Activated CD8-positive, alpha-beta T cell treated with anti-CD3 and anti-CD28 coated beads, Interleukin-2, amount 10 ng/mL, durations not matched to agents 7 days and 5 days (primary cell): ENCODE measurements at regions of chr7 and their contacts with region 1.

Region 1: GRCh38 chr7:12436896-12437535 is 33.4 kb upstream of the VWDE start:
- DNase-seq: no peak
- ATAC-seq: no peak
- H3K4me3 Mint-ChIP-seq: no peak overlapping the region
- H3K27ac Mint-ChIP-seq: no peak overlapping the region
- H3K4me1 Mint-ChIP-seq: no peaks in the 10 kb centered on the region
- H3K27me3 Mint-ChIP-seq: peaks cover 6% of the 10 kb centered on the region

Region 2: DNA sequence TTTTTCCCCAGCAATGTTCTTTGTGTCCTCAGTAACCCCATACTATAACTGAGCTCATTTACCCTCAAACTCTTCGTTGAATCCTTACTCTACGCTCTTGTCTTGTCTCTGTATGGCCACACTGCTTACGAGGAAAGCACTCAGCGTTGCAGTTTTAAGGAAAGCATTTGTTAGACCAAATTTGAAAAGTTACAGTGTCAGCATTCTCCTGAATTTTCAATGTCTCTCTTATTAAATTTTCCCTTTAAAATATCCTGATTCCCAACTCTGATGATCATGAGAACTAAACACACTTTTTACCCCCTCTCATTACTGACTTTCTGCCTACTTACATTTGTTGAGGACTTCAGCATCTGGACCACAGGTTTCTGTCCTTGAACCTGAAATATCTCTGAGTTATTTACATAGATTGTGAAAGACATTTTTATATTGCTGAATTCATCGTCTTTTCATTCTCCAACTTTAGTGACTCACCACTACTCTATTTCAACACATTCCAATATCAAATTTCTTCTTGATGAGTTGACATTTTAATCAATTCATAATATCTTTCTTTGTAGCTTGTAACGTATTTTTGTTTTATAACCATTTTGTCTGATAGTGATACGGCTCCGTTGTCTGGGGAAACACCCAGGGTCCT is 13.5 kb before region 1 on chr7:
- CTCF ChIA-PET with region 1: no interaction called
- POLR2A ChIA-PET with region 1: no interaction called
- DNase-seq: no peak
- ATAC-seq: no peak
- H3K4me3 Mint-ChIP-seq: no peak overlapping the region
- H3K27ac Mint-ChIP-seq: no peak overlapping the region
- H3K4me1 Mint-ChIP-seq: no peaks in the 10 kb centered on the region
- H3K27me3 Mint-ChIP-seq: peaks cover 7% of the 10 kb centered on the region

Region 3: GRCh38 chr7:12490117-12490688 is 53.2 kb after region 1 on chr7:
- CTCF ChIA-PET with region 1: interaction called, 11 read pairs
- POLR2A ChIA-PET with region 1: no interaction called
- DNase-seq: no peak
- ATAC-seq: no peak
- H3K4me3 Mint-ChIP-seq: no peak overlapping the region
- H3K27ac Mint-ChIP-seq: no peak overlapping the region
- H3K4me1 Mint-ChIP-seq: no peaks in the 10 kb centered on the region
- H3K27me3 Mint-ChIP-seq: peaks cover 6% of the 10 kb centered on the region

Region 4: DNA sequence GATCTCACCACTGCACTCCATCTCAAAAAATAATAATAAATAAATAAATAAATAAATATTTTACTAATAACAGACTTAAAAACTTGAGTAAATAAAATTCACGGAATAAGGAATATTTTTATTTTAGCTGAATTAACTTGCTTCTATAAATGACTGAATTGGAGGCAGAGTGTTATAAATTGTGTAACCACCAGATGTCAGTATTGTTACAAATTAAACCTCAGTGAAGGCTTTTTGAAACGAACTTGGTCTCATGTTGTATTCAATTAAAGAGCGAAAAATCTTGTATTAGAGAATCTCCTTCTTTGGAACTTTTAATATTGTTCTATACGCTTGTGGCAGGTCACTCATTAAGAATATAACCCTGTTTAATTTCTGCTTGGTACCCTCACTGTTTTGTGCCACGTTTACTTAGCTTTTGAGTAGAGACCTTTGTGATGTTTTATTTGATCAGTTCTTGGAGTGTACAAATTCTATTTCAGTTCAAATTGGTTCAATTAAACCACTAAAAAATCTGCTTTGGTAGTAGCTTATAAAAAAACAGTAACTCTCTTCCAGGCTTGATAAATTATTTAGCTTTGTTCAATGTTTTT is 87.9 kb after region 1 on chr7:
- CTCF ChIA-PET with region 1: no interaction called
- POLR2A ChIA-PET with region 1: no interaction called
- DNase-seq: no peak
- ATAC-seq: no peak
- H3K4me3 Mint-ChIP-seq: no peak overlapping the region
- H3K27ac Mint-ChIP-seq: no peak overlapping the region
- H3K4me1 Mint-ChIP-seq: no peaks in the 10 kb centered on the region
- H3K27me3 Mint-ChIP-seq: peaks cover 17% of the 10 kb centered on the region